AG04450 (cell line): ENCODE measurements at regions of chr10 and their contacts with region 1.

Region 1: GRCh38 chr10:13110908-13111307 is 10.9 kb downstream of the OPTN start:
- DNase-seq: no peak
- H3K4me3 ChIP-seq: no peak overlapping the region
- H3K27ac ChIP-seq: no peak overlapping the region
- H3K27me3 ChIP-seq: no peaks in the 10 kb centered on the region
- CTCF ChIP-seq: no peak

Region 2: GRCh38 chr10:12350167-12350872 is 760.6 kb before region 1 on chr10:
- CTCF ChIA-PET with region 1: interaction called, 10 read pairs
- POLR2A ChIA-PET with region 1: no interaction called
- DNase-seq: no peak
- H3K4me3 ChIP-seq: peak overlapping the region; percentile 92
- H3K27ac ChIP-seq: peak overlapping the region; percentile 31
- H3K27me3 ChIP-seq: peaks cover 8% of the 10 kb centered on the region
- CTCF ChIP-seq: peak; percentile 17; the same call in 1 of the 2 replicates

Region 3: GRCh38 chr10:13120786-13121499 is 10.0 kb after region 1 on chr10:
- CTCF ChIA-PET with region 1: no interaction called
- POLR2A ChIA-PET with region 1: no interaction called
- DNase-seq: no peak
- H3K4me3 ChIP-seq: no peak overlapping the region
- H3K27ac ChIP-seq: no peak overlapping the region
- H3K27me3 ChIP-seq: no peaks in the 10 kb centered on the region
- CTCF ChIP-seq: no peak